PC-9 (cell line): ENCODE measurements at regions of chr3 and their contacts with region 1.

Region 1: GRCh38 chr3:57518266-57518915 is 25.8 kb downstream of the DNAH12 start:
- DNase-seq: peak; percentile 69 to 93
- H3K4me3 ChIP-seq: no peak overlapping the region; the same call in 1 of the 2 replicates
- H3K27ac ChIP-seq: peak overlapping the region; percentile 92
- H3K4me1 ChIP-seq: peaks cover 38% of the 10 kb centered on the region
- H3K27me3 ChIP-seq: no peaks in the 10 kb centered on the region
- CTCF ChIP-seq: no peak

Region 2: GRCh38 chr3:57451150-57451846 is 67.1 kb before region 1 on chr3:
- CTCF ChIA-PET with region 1: no interaction called
- POLR2A ChIA-PET with region 1: no interaction called
- intact Hi-C with region 1: loop called (anchors 10 kb)
- DNase-seq: no peak
- H3K4me3 ChIP-seq: no peak overlapping the region
- H3K27ac ChIP-seq: peak overlapping the region; percentile 75
- H3K4me1 ChIP-seq: peaks cover 30% of the 10 kb centered on the region
- H3K27me3 ChIP-seq: no peaks in the 10 kb centered on the region
- CTCF ChIP-seq: no peak